Testis (tissue), 5 donors: ENCODE measurements at regions of chr2 and their contacts with region 1.

Region 1: GRCh38 chr2:133986081-133986837 is 267.6 kb upstream of the MGAT5 start:
- DNase-seq: no peak
- H3K4me3 ChIP-seq: no peak overlapping the region
- H3K27ac ChIP-seq: no peak overlapping the region
- H3K4me1 ChIP-seq: no peaks in the 10 kb centered on the region
- H3K27me3 ChIP-seq: no peaks in the 10 kb centered on the region
- CTCF ChIP-seq: no peak
- POLR2A ChIP-seq: no peak

Region 2: GRCh38 chr2:134245340-134245984 is 259.2 kb after region 1 on chr2:
- intact Hi-C with region 1: loop called (anchors 5 kb)
- DNase-seq: peak; percentile 91
- H3K4me3 ChIP-seq: no peak overlapping the region
- H3K27ac ChIP-seq: no peak overlapping the region
- H3K4me1 ChIP-seq: peaks cover 3% of the 10 kb centered on the region
- H3K27me3 ChIP-seq: no peaks in the 10 kb centered on the region
- CTCF ChIP-seq: peak; percentile 59 to 75 (median 74)
- POLR2A ChIP-seq: no peak